ENCODE measurements at regions of chr20 and their contacts with region 1.

Region 1: DNA sequence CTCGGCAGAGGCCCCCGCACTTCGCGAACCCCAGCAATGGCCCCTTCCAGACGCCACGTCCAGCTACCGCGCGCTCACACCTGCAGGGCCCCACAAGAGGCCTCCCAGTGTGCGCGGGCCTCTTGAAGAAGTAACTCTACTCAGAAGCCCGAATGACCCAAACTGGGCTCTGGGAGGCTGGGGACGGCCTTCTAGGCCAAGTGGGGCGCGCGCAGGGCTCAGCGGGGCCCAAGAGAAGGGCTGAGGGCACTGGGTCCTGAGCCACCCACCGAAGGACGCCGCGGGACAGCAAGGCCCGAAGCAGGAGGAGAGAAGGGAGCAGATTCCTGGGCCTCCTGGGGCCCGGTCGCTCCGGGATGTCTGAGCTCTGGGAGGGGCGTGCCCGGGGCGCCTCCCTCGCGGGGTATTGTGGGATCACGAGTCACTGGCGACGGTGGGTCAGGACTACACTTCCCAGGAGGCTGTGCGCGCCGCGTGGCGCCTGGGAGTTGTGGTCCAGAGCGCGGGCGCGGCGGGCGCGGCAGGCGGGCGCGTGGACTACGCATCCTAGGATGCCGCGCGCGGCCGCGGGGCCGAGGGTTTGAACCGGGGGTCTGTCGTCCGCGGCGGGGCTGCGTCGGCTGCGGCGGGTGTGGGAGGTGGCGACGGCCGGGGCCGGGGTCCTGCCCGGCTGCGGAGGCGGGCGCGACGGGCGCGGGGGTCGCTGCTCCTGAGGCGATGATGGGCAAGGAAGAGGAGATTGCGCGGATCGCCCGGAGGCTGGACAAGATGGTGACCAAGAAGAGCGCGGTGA is at the start of gene TCEA2:
- H3K4me3 Mint-ChIP-seq: peak within 1 kb of the TSS; percentile 92
- H3K27ac Mint-ChIP-seq: peak within 1 kb of the TSS; percentile 90
- H3K4me1 Mint-ChIP-seq: peaks cover 55% of the 10 kb centered on the region
- H3K27me3 Mint-ChIP-seq: peaks cover 43% of the 10 kb centered on the region

Region 2: GRCh38 chr20:63980806-63981728 is 81.7 kb before region 1 on chr20 and contains the start of gene PRPF6:
- intact Hi-C with region 1: loop called (anchors 2 kb)
- H3K4me3 Mint-ChIP-seq: peak within 1 kb of the TSS; percentile 81
- H3K27ac Mint-ChIP-seq: peak within 1 kb of the TSS; percentile 85
- H3K4me1 Mint-ChIP-seq: peaks cover 59% of the 10 kb centered on the region
- H3K27me3 Mint-ChIP-seq: peaks cover 3% of the 10 kb centered on the region

Measured in dendritic cell treated with granulocyte-macrophage colony-stimulating factor and Interleukin-4, amounts not matched to agents 40 ng/mL and 50 ng/mL, for 4 days (primary cell).